Endothelial cell of umbilical vein (primary cell): ENCODE measurements at regions of chr3 and their contacts with region 1.

Region 1: DNA sequence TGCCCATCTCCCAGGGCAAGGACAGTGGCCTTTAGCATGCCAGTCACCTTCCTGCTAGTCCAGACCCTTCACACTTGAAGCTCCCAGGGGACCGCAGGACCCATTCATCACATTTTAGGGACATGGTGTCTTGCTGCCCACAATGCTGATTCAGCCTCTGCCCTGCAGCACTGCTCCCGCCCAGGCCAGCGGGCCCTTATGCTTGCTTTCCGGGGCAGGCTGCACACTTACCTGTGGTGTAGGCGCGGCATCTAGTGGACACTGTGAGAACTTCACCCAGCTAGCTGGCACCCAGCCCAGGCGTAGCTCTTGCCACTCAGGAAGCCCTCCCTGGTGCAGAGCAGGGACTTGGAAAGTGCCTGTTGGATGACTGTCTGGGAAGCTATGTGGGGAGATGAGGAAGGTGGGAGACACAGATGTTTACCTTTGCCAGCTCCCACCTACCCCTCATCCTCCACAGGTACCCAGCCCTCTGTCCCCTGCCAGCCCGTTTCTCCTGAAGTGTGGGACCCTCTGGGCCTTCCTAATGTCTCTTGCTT is 26.2 kb upstream of the NR2C2 start:
- DNase-seq: peak; percentile 96
- H3K4me3 ChIP-seq: no peak overlapping the region
- H3K27ac ChIP-seq: no peak overlapping the region
- H3K4me1 ChIP-seq: peaks cover 4% of the 10 kb centered on the region
- H3K27me3 ChIP-seq: no peaks in the 10 kb centered on the region
- CTCF ChIP-seq: peak; percentile 93
- POLR2A ChIP-seq: no peak

Region 2: DNA sequence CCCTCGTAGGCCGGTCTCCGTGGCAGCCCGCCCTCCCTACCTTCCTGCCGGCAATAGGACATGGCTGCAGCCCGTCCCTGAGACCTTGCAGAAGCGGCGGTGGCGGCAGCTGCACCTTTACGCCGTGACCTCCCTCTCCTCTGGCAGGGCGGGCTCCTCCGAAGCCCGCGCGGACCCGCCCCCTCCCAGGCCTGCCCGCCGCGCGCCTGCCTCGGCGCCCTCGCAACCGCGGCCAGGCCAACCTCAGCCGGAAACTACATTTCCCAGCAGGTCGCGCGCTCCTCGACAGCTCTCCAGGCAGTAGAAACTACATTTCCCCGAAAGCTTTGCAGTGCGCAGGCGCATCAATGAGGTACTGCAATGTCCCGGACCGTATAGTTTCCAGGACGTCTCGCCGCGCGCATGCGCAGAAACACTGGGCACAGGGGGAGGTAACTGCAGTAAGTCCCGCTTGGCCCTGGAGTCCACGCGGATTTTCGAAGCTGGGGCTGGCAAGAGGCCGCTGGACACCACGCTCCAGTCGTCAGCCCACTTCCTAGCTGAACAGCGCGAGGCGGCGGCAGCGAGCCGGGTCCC is 796.4 kb before region 1 on chr3 and contains the starts of genes CHCHD4 and TMEM43:
- CTCF ChIA-PET with region 1: no interaction called
- POLR2A ChIA-PET with region 1: no interaction called
- dilution Hi-C with region 1: no loop called
- intact Hi-C with region 1: no loop called
- DNase-seq: peak; percentile 99
- H3K4me3 ChIP-seq: peak within 1 kb of the TSS; percentile 66 to 90 (median 67)
- H3K27ac ChIP-seq: peak within 1 kb of the TSS; percentile 61
- H3K4me1 ChIP-seq: peaks cover 22% of the 10 kb centered on the region
- H3K27me3 ChIP-seq: no peaks in the 10 kb centered on the region
- CTCF ChIP-seq: peak in 1 of 2 donors; percentile 1
- POLR2A ChIP-seq: peak; percentile 58
- total RNA-seq, gene CHCHD4: 12.4 and 13.6 TPM in 2 replicates
- total RNA-seq, gene TMEM43: 69.6 and 80.6 TPM in 2 replicates

Region 3: GRCh38 chr3:14633819-14634424 is 287.2 kb before region 1 on chr3:
- CTCF ChIA-PET with region 1: interaction called, 4 read pairs
- POLR2A ChIA-PET with region 1: no interaction called
- dilution Hi-C with region 1: no loop called
- intact Hi-C with region 1: loop called (anchors 1 kb)
- DNase-seq: peak; percentile 53
- H3K4me3 ChIP-seq: no peak overlapping the region
- H3K27ac ChIP-seq: peak overlapping the region; percentile 54
- H3K4me1 ChIP-seq: peaks cover 15% of the 10 kb centered on the region
- H3K27me3 ChIP-seq: peaks cover 0 to 2% of the 10 kb centered on the region in 2 experiments
- CTCF ChIP-seq: peak; percentile 76 to 83
- POLR2A ChIP-seq: no peak

Region 4: DNA sequence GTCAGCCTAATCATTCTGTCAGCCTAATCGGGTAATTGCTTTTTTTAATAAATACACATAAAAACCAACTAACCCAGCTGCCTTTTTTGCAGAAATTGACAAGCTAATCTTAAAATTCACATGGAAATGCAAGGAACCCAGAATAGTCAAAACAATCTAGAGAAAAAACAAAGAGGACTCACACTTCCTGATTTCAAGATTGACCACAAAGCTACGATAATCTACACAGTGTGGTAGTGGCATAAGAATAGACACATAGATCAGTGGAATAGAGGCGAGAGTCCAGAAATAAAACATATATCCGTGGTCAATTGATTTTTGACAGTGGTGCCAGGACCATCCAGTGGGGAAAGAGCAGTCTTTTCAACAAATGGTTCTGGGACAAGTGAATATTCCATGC is 248.6 kb before region 1 on chr3:
- CTCF ChIA-PET with region 1: interaction called, 77 read pairs
- POLR2A ChIA-PET with region 1: interaction called, 3 read pairs
- dilution Hi-C with region 1: no loop called
- intact Hi-C with region 1: loop called (anchors 1 kb)
- DNase-seq: no peak
- H3K4me3 ChIP-seq: no peak overlapping the region
- H3K27ac ChIP-seq: no peak overlapping the region
- H3K4me1 ChIP-seq: no peaks in the 10 kb centered on the region
- H3K27me3 ChIP-seq: no peaks in the 10 kb centered on the region
- CTCF ChIP-seq: no peak
- POLR2A ChIP-seq: no peak

Region 5: DNA sequence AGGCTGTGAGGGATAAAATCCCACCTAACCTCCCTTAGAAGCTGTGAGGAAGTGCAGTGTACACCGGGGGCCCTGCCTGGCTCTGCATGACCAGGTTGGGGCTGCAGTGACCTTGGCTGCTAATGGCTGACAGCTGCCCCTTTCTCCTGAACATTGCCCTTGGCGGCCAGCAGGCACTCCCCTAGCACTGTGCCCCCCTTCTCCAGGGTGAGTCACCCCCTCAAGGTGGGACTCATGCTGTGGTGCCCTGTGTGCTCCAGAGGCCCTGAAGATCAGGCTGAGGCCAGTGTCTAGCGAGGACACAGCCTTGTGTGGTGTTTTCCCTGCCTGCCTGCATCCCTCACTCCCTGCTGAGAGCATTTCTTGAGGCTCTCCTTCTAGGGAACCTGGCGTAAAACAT is 123.4 kb before region 1 on chr3:
- CTCF ChIA-PET with region 1: interaction called, 17 read pairs
- POLR2A ChIA-PET with region 1: no interaction called
- dilution Hi-C with region 1: no loop called
- intact Hi-C with region 1: no loop called
- DNase-seq: no peak
- H3K4me3 ChIP-seq: no peak overlapping the region
- H3K27ac ChIP-seq: no peak overlapping the region
- H3K4me1 ChIP-seq: peaks cover 2% of the 10 kb centered on the region
- H3K27me3 ChIP-seq: no peaks in the 10 kb centered on the region
- CTCF ChIP-seq: no peak
- POLR2A ChIP-seq: no peak

Region 6: DNA sequence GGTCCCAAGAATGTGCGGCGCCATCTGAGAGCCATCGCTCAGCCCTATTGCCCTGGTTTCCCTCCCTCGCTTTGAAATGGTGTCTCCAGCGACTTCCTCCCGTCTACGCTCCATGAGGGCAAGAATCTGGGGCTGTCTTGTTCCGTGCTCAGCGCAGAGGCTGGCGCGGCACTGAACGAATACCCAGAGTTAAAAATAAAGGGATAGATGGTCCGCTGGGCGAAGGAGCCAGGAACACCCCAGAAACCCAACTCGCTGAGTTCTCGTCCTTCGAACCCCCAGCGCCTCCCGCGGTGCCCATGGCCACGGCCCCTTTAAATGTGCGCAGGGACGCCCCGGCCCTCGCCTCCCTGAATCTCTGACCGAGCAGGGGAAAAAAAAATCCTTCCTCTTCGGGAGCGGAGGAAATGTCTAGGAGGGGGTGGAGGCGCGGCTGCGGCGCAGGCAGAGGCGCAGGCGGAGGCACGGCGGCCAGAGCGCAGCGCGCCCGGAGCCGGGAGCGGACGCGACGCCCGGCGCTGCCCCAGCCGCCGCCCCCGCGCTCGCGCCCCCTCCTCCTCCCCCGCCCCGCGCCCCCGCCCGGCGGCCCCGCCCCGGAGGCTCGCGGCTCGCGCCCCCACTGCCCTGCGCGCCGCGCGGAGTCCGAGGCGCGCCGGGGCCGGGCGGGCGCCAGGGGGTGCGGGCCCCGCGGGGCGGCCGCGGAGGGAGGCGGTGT is 110.9 kb before region 1 on chr3:
- CTCF ChIA-PET with region 1: interaction called, 5 read pairs
- POLR2A ChIA-PET with region 1: no interaction called
- dilution Hi-C with region 1: no loop called
- intact Hi-C with region 1: loop called (anchors 1 kb)
- DNase-seq: peak; percentile 81
- H3K4me3 ChIP-seq: peak overlapping the region; percentile 36 to 87 (median 77)
- H3K27ac ChIP-seq: peak overlapping the region; percentile 61
- H3K4me1 ChIP-seq: peaks cover 50% of the 10 kb centered on the region
- H3K27me3 ChIP-seq: no peaks in the 10 kb centered on the region
- CTCF ChIP-seq: no peak
- POLR2A ChIP-seq: no peak

Region 7: GRCh38 chr3:14822670-14823390 is 98.3 kb before region 1 on chr3:
- CTCF ChIA-PET with region 1: interaction called, 11 read pairs
- POLR2A ChIA-PET with region 1: interaction called, 11 read pairs
- dilution Hi-C with region 1: no loop called
- intact Hi-C with region 1: no loop called
- DNase-seq: peak; percentile 32
- H3K4me3 ChIP-seq: no peak overlapping the region
- H3K27ac ChIP-seq: peak overlapping the region; percentile 14
- H3K4me1 ChIP-seq: peaks cover 26% of the 10 kb centered on the region
- H3K27me3 ChIP-seq: no peaks in the 10 kb centered on the region
- CTCF ChIP-seq: no peak
- POLR2A ChIP-seq: no peak

Region 8: DNA sequence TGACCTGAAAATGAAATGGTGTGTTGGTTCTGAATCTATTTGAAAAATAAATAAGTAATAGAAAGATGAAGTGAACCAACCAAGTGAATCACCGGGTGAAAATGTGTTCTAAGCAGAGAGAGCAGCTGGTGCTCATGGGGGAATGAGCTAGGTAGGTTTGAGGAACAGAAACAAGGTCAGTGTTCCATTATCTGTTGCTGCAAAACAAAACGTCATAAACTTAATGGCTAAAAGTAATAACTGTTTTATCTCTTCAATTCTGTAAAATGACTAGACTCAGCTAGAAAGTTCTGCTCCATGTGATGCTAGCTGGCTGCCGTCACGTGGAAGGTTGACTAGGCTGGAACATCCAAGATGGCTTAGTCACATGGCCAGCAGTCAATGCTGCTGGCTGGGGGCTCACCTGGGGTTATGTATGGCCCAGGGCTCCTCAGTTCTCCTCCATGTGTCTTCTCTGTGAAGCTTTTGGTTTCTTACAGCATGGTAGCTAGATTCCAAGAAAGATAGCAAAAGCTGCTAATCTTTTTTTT is 424.5 kb after region 1 on chr3:
- CTCF ChIA-PET with region 1: no interaction called
- POLR2A ChIA-PET with region 1: no interaction called
- dilution Hi-C with region 1: no loop called
- intact Hi-C with region 1: no loop called
- DNase-seq: no peak
- H3K4me3 ChIP-seq: no peak overlapping the region
- H3K27ac ChIP-seq: no peak overlapping the region
- H3K4me1 ChIP-seq: no peaks in the 10 kb centered on the region
- H3K27me3 ChIP-seq: peaks cover 0 to 3% of the 10 kb centered on the region in 2 experiments
- CTCF ChIP-seq: no peak
- POLR2A ChIP-seq: no peak